ENCODE measurements at regions of chr2 and their contacts with region 1.

Region 1: GRCh38 chr2:99154643-99155536 is at the starts of genes LIPT1 and TSGA10:
- DNase-seq: peak; percentile 92
- ATAC-seq: peak; percentile 91
- H3K4me3 Mint-ChIP-seq: peak within 1 kb of the TSS; percentile 90
- H3K27ac Mint-ChIP-seq: peak within 1 kb of the TSS; percentile 92
- H3K4me1 Mint-ChIP-seq: peaks cover 55% of the 10 kb centered on the region
- H3K27me3 Mint-ChIP-seq: no peaks in the 10 kb centered on the region
- CTCF ChIP-seq: no peak
- total RNA-seq, gene LIPT1: 15.1 and 18.1 TPM in 2 replicates
- total RNA-seq, gene TSGA10: 18.5 and 20.4 TPM in 2 replicates

Region 2: DNA sequence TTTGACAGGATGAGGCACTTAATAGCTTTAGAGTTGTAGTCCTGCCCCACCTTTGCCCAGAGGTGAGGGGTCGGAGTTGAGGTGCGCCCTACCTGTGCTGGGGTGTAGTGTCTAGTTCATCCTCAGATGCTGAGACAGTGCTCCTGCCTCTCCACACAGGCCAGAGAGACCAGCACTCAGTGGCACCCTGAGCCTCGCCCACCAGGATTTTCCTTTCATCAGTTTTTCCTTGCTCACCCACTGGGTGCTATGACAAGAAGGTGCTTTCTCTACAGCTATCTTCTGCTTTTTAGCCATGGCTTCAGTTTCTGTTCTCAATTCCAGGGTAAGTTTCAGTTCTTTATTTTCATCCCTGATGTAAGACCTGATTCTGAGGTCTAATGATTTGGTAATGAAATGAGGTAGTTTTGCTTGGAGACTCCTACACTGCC is 1142.3 kb before region 1 on chr2:
- CTCF ChIA-PET with region 1: no interaction called
- POLR2A ChIA-PET with region 1: no interaction called
- intact Hi-C with region 1: loop called (anchors 5 kb)
- DNase-seq: peak; percentile 61
- ATAC-seq: peak; percentile 81
- H3K4me3 Mint-ChIP-seq: peak overlapping the region; percentile 79
- H3K27ac Mint-ChIP-seq: peak overlapping the region; percentile 96
- H3K4me1 Mint-ChIP-seq: peaks cover 75% of the 10 kb centered on the region
- H3K27me3 Mint-ChIP-seq: no peaks in the 10 kb centered on the region
- CTCF ChIP-seq: no peak

Region 3: DNA sequence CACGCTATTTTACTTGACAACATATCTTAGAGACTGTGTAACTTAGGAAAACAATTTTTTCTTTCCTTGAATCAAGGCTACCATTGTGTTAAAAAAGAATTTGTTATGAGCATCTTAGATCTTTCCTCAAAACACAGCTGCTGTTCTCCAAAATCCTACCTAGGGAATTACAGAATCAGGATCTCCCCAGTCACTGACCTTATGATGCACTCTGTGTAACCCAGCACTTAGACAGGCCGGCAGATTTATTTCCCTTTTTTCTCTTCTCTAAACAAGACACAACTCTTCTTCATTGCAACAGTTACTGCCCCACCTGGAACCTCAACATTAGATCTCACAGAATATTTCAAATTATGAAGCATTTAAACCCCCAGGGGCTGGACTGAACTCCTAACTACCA is 26.9 kb before region 1 on chr2:
- CTCF ChIA-PET with region 1: no interaction called
- POLR2A ChIA-PET with region 1: no interaction called
- intact Hi-C with region 1: no loop called
- DNase-seq: no peak
- ATAC-seq: no peak
- H3K4me3 Mint-ChIP-seq: no peak overlapping the region
- H3K27ac Mint-ChIP-seq: no peak overlapping the region
- H3K4me1 Mint-ChIP-seq: no peaks in the 10 kb centered on the region
- H3K27me3 Mint-ChIP-seq: no peaks in the 10 kb centered on the region
- CTCF ChIP-seq: no peak

Region 4: DNA sequence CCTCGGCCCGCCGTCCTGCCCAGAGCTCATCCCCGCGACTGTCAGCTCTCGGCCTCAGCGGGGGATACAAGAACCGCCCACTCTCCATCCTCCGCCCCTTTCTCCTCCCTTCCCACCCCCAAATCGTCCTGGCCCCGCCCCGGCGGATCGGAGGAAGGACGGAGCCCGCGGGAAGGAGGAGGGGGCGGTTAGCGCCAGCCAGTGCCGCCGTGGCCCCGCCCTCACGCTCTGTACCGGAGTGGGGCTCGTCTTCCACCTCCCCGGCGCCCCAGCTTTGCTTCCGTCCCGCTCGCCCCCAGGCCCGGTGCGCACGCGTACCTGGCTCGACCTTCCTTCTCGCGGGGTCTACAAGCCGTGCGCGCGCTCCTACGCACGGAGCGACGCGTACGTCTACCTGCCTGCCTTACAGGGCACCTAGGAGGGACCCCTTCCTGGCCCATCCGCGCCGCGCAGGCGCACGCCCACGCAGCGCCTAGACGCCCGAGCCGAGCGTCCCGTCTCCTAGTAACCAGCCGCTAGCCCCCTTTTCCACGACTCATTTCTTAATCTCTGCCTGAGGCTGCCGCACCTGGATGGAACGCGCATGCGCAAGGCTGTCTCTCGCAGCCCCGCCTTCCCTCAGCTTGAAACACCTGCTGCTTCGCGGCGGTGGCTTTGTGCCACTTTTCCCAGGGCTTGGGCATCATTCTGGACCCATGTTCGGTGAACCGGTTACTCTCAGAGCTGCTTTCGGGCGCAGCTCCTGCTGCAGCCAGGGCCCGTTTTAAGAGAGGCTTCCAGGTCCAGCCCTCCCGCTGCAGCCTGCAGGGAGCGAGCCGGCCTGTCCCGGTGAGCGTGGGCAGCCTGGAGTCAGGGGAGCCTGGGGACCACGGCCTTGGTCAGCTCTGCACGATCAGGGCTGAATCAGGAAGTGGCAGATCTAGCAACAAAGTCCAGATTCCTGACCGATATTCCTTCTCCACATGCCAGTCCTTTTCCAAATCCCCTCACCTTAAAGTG is 13.5 kb before region 1 on chr2 and contains the start of gene C2orf15:
- CTCF ChIA-PET with region 1: interaction called, 5 read pairs
- POLR2A ChIA-PET with region 1: interaction called, 143 read pairs
- intact Hi-C with region 1: loop called (anchors 1 kb)
- DNase-seq: peak; percentile 96
- ATAC-seq: peak; percentile 88
- H3K4me3 Mint-ChIP-seq: peak within 1 kb of the TSS; percentile 97
- H3K27ac Mint-ChIP-seq: peak within 1 kb of the TSS; percentile 96
- H3K4me1 Mint-ChIP-seq: peaks cover 26% of the 10 kb centered on the region
- H3K27me3 Mint-ChIP-seq: no peaks in the 10 kb centered on the region
- CTCF ChIP-seq: no peak
- total RNA-seq, gene C2orf15: 0.69 and 1.2 TPM in 2 replicates

Measured in activated B cell treated with CpG ODN at 0.5 μM for 24 hours (primary cell).